Cardiac septum (tissue), 1 donor: ENCODE measurements at regions of chr4 and their contacts with region 1.

Region 1: GRCh38 chr4:1269209-1269608 is 20.3 kb upstream of the CTBP1 start:
- DNase-seq: no peak

Region 2: GRCh38 chr4:1130316-1131186 is 138.7 kb before region 1 on chr4:
- intact Hi-C with region 1: loop called (anchors 2 kb)
- DNase-seq: no peak

Region 3: DNA sequence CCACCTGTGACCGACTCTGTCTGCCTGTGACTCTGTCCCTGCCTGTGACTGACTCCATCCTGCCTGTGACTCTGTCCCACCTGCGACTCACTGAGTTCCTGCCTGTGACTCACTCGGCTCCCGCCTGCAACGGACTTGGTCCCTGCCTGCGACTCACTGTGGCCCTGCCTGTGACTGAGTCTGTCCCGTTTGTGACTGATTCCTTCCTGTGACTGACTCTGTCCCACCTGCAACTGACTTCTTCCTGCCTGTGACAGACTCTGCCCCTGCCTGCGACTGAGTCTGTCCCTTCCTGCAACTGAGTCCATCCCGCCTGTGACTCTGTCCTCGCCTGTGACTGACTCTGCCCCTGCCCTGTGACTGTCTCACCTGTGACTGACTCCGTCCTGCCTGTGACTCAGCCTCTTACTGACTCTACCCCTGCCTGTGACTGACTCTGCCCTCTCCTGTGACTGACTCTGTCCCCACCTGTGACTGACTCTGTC is 68.2 kb after region 1 on chr4:
- intact Hi-C with region 1: no loop called
- DNase-seq: no peak